Naive thymus-derived CD8-positive, alpha-beta T cell (primary cell): ENCODE measurements at regions of chr6 and their contacts with region 1.

Region 1: DNA sequence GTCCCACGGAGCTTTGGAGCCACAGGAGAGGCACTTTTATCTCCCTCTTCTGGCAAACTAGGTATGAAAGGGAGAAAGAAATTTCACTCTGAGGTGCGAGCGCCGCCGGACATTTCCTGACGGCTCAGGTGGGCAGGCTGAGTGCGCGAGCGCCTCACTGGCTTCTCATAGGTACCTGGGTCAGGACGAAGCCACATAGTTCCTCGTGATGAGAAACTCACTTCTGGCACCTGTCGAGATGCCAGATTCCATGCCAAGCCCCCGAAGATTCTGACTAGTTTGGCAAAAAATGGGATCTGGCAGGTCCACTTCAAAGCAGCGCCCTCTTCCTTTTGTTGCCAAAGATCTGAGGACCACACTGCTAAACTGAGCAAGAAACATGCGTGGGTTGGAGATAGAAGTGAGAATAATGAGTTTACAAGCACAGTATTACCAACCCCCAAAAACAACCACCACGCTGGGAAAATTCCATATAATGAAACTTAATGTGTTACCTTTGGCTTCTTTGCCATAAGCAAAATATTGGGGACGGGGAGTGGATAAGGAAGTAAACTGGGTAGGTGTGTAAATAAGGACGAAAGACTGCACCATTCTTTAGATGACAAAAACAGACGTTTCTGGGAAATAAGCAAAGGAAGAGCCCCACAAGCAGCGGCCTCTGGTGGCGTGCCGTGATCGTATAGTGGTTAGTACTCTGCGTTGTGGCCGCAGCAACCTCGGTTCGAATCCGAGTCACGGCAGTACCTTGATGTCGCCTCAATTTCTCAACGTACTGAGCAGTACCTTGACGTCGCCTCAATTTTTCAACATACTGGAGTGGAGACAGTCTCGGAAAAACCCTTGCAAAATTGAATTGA is 89.8 kb upstream of the PRSS16 start:
- DNase-seq: peak; percentile 64 to 92 (median 86)
- ATAC-seq: peak; percentile 87 to 91
- H3K4me3 Mint-ChIP-seq: peak overlapping the region; percentile 79 to 92 (median 90)
- H3K27ac Mint-ChIP-seq: peak overlapping the region; percentile 56 to 99 (median 84)
- H3K4me1 Mint-ChIP-seq: peaks cover 23 to 48% (median 42%) of the 10 kb centered on the region in 4 donors
- H3K27me3 Mint-ChIP-seq: no peaks in the 10 kb centered on the region

Region 2: GRCh38 chr6:27126815-27127537 is 30.7 kb before region 1 on chr6:
- POLR2A ChIA-PET with region 1: interaction called, 44 read pairs
- DNase-seq: peak; percentile 58 to 88 (median 79)
- ATAC-seq: peak; percentile 76 to 80
- H3K4me3 Mint-ChIP-seq: peak overlapping the region; percentile 62 to 83 (median 78)
- H3K27ac Mint-ChIP-seq: peak overlapping the region; percentile 59 to 92 (median 82)
- H3K4me1 Mint-ChIP-seq: peaks cover 6 to 19% (median 14%) of the 10 kb centered on the region in 4 donors
- H3K27me3 Mint-ChIP-seq: no peaks in the 10 kb centered on the region

Region 3: DNA sequence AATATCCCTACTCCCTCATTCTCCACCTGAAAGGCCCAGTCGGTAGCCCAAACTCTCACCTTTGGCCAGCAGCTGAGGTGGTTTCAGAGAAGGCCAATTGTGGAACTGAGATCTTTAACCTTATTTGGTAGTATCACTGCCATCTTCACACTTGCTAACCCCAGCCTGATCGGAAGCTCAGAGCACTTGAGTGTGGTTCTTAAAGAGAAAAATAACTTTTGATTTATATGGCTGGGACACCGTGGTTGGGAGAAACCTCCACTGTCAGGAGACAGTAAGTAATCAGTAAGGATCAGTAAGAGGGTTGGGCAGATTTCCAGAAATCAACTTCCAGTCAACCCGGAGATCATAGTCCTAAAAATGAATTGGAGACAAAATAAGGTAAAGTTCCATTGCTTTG is 67.0 kb after region 1 on chr6:
- POLR2A ChIA-PET with region 1: no interaction called
- DNase-seq: no peak
- ATAC-seq: no peak
- H3K4me3 Mint-ChIP-seq: no peak overlapping the region
- H3K27ac Mint-ChIP-seq: no peak overlapping the region
- H3K4me1 Mint-ChIP-seq: no peaks in the 10 kb centered on the region
- H3K27me3 Mint-ChIP-seq: peaks cover 53 to 84% (median 63%) of the 10 kb centered on the region in 5 donors